AG04449 (cell line): ENCODE measurements at regions of chr12 and their contacts with region 1.

Region 1: GRCh38 chr12:21451529-21451928 is 14.1 kb downstream of the PYROXD1 start:
- DNase-seq: no peak
- H3K4me3 ChIP-seq: no peak overlapping the region
- CTCF ChIP-seq: no peak

Region 2: GRCh38 chr12:21248679-21249078 is 202.8 kb before region 1 on chr12:
- CTCF ChIA-PET with region 1: interaction called, 14 read pairs
- POLR2A ChIA-PET with region 1: no interaction called
- DNase-seq: no peak
- H3K4me3 ChIP-seq: no peak overlapping the region
- CTCF ChIP-seq: no peak

Region 3: DNA sequence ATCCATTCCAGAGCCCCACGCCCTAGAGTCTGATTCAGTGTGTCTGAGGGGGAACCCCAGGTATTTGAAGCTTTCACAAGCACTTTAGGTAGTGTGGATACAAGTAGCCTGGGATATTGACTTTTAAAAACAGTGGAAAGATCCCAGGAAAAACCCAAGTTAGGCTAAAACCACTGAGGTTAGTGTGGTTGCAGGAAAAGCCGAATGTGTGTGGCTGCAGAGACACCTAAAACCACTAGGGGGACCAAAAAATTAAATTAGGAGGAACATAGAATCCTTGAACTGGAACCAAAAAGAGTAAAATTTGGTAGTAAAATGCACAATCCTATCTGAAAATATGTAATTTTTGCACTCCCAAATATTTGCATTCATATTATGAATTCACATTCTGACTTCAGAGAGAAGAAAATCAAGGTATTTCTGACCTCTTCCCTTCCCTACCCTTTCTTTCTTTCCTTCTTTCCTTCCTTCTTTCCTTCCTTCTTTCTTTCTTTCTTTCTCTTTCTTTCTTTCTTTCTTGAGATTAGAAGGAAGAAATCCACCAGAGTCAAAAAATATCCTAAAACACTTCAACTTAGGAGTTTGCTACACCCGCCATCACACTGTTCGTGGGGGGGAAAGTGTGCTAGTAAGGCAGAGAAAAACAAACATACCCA is 154.7 kb before region 1 on chr12:
- CTCF ChIA-PET with region 1: interaction called, 28 read pairs
- POLR2A ChIA-PET with region 1: no interaction called
- DNase-seq: no peak
- H3K4me3 ChIP-seq: no peak overlapping the region
- CTCF ChIP-seq: peak; percentile 52

Region 4: GRCh38 chr12:21438643-21439042 is 12.9 kb before region 1 on chr12:
- CTCF ChIA-PET with region 1: interaction called, 18 read pairs
- POLR2A ChIA-PET with region 1: no interaction called
- DNase-seq: no peak
- H3K4me3 ChIP-seq: peak overlapping the region; percentile 67
- CTCF ChIP-seq: no peak